Endothelial cell of umbilical vein (primary cell): ENCODE measurements at regions of chr14 and their contacts with region 1.

Region 1: GRCh38 chr14:96852823-96853422 is 55.7 kb downstream of the VRK1 start:
- DNase-seq: peak; percentile 49
- H3K4me3 ChIP-seq: no peak overlapping the region
- H3K27ac ChIP-seq: no peak overlapping the region
- H3K4me1 ChIP-seq: peaks cover 5% of the 10 kb centered on the region
- H3K27me3 ChIP-seq: no peaks in the 10 kb centered on the region
- CTCF ChIP-seq: peak; percentile 31 to 49
- POLR2A ChIP-seq: no peak

Region 2: GRCh38 chr14:96584199-96584906 is 268.6 kb before region 1 on chr14:
- CTCF ChIA-PET with region 1: interaction called, 8 read pairs
- POLR2A ChIA-PET with region 1: no interaction called
- dilution Hi-C with region 1: no loop called
- intact Hi-C with region 1: loop called (anchors 1 kb)
- DNase-seq: peak; percentile 21
- H3K4me3 ChIP-seq: no peak overlapping the region
- H3K27ac ChIP-seq: no peak overlapping the region
- H3K4me1 ChIP-seq: no peaks in the 10 kb centered on the region
- H3K27me3 ChIP-seq: peaks cover 0 to 4% of the 10 kb centered on the region in 2 experiments
- CTCF ChIP-seq: peak; percentile 27 to 47
- POLR2A ChIP-seq: no peak

Region 3: DNA sequence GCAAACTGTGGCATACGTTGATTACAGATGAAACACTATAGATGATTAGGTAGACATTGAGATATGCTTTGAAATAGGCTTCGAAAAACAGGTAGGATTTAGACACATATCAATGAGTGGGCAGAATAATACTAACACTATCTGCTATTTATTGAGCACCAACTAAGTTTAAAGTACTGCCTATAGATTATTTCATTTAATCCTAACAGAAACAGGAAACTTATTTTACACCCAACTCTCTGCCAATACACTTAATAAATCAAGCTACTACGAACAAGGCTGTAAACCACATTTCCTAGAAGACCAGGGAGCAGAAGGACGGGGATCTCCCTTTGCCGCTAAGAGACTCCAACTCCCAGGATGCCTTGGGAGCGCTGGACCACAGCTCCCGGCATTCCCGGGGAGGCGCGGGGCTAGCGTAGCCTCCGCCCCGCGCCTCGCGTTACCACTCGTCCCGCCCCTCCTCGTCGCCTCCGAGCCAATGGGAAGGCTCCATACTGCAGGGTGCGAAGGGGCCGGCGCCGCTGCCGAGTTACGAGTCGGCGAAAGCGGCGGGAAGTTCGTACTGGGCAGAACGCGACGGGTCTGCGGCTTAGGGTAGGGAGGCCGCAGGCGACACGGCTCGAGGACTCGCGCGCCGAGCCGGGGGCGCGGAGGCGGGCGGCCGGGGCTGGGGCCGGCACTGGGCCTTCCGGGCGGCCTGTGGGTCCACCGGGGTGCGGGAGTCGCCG is 55.9 kb before region 1 on chr14 and contains the start of gene VRK1:
- CTCF ChIA-PET with region 1: interaction called, 21 read pairs
- POLR2A ChIA-PET with region 1: no interaction called
- dilution Hi-C with region 1: no loop called
- intact Hi-C with region 1: loop called (anchors 2 kb)
- DNase-seq: peak; percentile 98
- H3K4me3 ChIP-seq: peak within 1 kb of the TSS; percentile 38 to 93 (median 71)
- H3K27ac ChIP-seq: peak within 1 kb of the TSS; percentile 46
- H3K4me1 ChIP-seq: peaks cover 10% of the 10 kb centered on the region
- H3K27me3 ChIP-seq: no peaks in the 10 kb centered on the region
- CTCF ChIP-seq: no peak
- POLR2A ChIP-seq: peak; percentile 63
- total RNA-seq, gene VRK1: 31.7 and 35.1 TPM in 2 replicates

Region 4: GRCh38 chr14:96827290-96827689 is 25.6 kb before region 1 on chr14:
- CTCF ChIA-PET with region 1: interaction called, 33 read pairs
- POLR2A ChIA-PET with region 1: interaction called, 3 read pairs
- dilution Hi-C with region 1: no loop called
- intact Hi-C with region 1: no loop called
- DNase-seq: no peak
- H3K4me3 ChIP-seq: no peak overlapping the region
- H3K27ac ChIP-seq: no peak overlapping the region
- H3K4me1 ChIP-seq: no peaks in the 10 kb centered on the region
- H3K27me3 ChIP-seq: no peaks in the 10 kb centered on the region
- CTCF ChIP-seq: no peak
- POLR2A ChIP-seq: no peak

Region 5: DNA sequence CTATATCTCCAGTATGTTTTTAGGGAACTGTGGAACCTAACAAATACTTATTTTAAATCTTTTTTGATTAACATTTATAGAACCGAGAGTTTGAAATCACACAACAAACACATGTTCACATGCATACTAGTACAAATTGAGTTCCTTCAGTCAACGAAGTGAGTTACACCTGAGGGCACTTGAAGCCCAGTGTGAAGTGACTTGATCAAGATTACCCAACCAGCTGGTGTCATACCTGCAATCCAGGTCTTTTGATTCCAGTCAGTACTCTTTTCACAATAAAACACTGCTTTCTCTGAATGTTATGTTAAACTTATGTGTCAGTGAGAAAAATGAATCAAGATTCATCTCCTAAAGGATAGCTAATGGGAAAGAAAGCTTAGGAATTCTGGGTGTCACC is 20.6 kb before region 1 on chr14:
- CTCF ChIA-PET with region 1: interaction called, 33 read pairs
- POLR2A ChIA-PET with region 1: interaction called, 3 read pairs
- dilution Hi-C with region 1: no loop called
- intact Hi-C with region 1: no loop called
- DNase-seq: no peak
- H3K4me3 ChIP-seq: no peak overlapping the region
- H3K27ac ChIP-seq: no peak overlapping the region
- H3K4me1 ChIP-seq: no peaks in the 10 kb centered on the region
- H3K27me3 ChIP-seq: no peaks in the 10 kb centered on the region
- CTCF ChIP-seq: no peak
- POLR2A ChIP-seq: no peak

Region 6: DNA sequence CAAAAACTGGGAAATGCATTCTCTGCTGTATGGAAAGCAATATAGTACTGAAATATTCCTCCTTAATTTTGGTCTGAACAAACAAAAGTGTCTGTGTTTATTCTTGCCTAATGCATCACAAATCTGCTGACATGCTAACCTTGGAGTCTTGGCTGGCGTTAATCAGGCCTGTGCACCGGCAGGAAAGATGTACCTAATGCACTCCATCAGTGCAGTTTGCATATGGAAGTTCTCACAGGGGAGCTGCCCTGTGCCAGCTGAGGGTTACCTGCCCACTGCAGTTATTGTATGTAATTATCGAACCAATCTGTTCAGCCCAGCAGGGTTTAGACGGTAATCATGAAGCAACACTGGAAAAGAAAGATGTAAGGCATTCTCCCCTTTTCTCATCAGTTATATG is 21.2 kb after region 1 on chr14:
- CTCF ChIA-PET with region 1: interaction called, 85 read pairs
- POLR2A ChIA-PET with region 1: no interaction called
- dilution Hi-C with region 1: no loop called
- intact Hi-C with region 1: no loop called
- DNase-seq: no peak
- H3K4me3 ChIP-seq: no peak overlapping the region
- H3K27ac ChIP-seq: no peak overlapping the region
- H3K4me1 ChIP-seq: no peaks in the 10 kb centered on the region
- H3K27me3 ChIP-seq: no peaks in the 10 kb centered on the region
- CTCF ChIP-seq: no peak
- POLR2A ChIP-seq: no peak

Region 7: DNA sequence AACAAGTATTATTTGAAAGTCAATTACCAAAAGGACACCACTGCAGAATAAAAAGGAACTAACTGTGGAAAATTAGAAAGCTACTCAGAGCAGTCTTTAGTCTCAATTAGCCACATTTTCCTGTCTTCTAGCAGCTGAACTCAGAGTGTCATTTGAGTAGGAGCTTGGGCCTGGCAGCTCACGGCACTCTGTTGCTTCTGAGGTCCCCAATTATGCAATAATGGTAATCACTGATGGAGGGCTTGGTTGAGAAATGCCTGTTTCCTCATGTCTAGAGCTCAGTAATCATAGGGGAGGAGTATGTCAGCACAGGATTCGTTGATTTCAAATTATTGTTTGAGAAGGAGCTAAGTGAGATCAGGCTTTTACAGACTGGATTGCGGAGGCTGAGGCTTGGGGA is 52.9 kb after region 1 on chr14:
- CTCF ChIA-PET with region 1: no interaction called
- POLR2A ChIA-PET with region 1: no interaction called
- dilution Hi-C with region 1: no loop called
- intact Hi-C with region 1: no loop called
- DNase-seq: no peak
- H3K4me3 ChIP-seq: no peak overlapping the region
- H3K27ac ChIP-seq: no peak overlapping the region
- H3K4me1 ChIP-seq: no peaks in the 10 kb centered on the region
- H3K27me3 ChIP-seq: no peaks in the 10 kb centered on the region
- CTCF ChIP-seq: no peak
- POLR2A ChIP-seq: no peak